Right lobe of liver (tissue), 6 donors: ENCODE measurements at regions of chr17 and their contacts with region 1.

Region 1: GRCh38 chr17:38485146-38485468 is 56.8 kb downstream of the ARHGAP23 start:
- DNase-seq: no peak
- ATAC-seq: no peak
- H3K4me3 ChIP-seq: no peak overlapping the region
- H3K27ac ChIP-seq: no peak overlapping the region
- H3K4me1 ChIP-seq: no peaks in the 10 kb centered on the region
- H3K27me3 ChIP-seq: no peaks in the 10 kb centered on the region
- CTCF ChIP-seq: peak in 1 of 4 donors; percentile 1
- POLR2A ChIP-seq: no peak

Region 2: DNA sequence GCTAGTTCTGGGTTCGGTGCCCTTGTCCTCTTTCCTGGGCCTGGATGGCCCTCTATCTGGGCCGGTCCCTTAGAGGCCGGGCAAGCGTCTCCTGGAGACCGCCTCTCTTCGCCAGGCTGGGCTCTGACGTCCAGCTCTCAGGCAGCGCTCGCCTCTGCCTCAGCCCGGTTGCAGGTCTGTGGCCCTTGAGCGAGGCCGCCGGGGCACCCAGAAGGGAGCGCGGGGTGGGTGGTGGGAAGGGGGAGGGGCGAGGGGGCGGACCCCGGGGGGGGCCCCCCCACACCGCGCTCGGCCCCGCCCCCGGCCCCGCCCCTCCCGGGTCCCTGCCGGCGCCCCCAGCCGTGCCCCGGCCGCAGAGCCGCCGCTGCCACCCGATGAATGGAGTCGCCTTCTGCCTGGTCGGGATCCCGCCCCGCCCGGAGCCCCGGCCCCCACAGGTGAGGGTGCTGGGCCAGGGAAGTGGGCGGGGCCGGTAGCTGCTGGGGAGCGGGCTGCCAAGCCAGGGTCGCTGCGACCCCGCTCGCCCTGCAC is 56.9 kb before region 1 on chr17 and contains the start of gene ARHGAP23:
- intact Hi-C with region 1: loop called (anchors 10 kb)
- DNase-seq: peak in 2 of 3 donors; percentile 65 to 67
- ATAC-seq: peak; percentile 62 to 67 (median 64)
- H3K4me3 ChIP-seq: peak within 1 kb of the TSS; percentile 63 to 78 (median 65)
- H3K27ac ChIP-seq: peak within 1 kb of the TSS; percentile 43 to 69 (median 51)
- H3K4me1 ChIP-seq: peaks cover 0 to 7% (median 0%) of the 10 kb centered on the region in 4 donors
- H3K27me3 ChIP-seq: no peaks in the 10 kb centered on the region
- CTCF ChIP-seq: no peak
- POLR2A ChIP-seq: no peak
- total RNA-seq, gene ARHGAP23: 1.4 to 9.5 (median 3.8) TPM

Region 3: DNA sequence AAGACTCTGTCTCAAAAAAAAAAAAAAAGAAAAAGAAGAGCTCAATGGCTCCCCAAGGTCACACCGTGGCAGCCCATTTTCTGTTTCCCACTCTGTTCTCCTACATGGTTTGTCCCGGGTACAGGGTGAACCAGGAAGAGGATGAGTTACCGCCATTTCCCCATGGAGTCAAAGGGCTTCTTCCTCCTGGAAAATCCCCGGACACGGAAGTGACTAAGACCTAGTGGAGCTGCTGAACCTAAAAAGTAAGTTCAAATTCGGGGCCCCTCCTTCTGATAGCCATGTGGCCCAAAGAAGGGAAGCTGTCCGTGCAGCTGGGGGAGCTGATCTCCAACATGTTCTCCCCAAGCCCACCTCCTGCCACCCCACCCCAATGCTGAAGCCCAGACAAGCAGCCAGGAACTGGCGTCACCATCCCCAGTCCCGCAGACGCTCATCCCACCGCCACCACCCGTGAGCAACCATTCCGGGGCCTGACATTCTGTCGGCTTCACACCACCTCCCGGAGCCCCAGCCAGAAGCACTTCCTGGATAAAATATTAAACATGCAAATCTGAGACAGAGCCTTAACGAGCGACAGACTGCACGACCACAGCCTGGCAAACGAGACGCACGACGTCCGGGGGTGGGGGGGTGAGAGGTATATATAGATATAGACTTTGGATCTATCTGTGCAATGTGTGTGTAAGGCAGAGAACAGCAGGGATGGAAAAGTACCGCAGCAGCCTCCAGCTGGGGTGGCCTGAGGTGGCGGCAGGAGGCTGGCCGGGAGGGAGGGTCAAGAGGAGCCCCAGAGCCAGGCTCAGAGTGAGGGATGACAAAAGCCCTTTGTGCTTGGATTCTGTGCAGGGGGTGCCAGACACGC is 172.1 kb after region 1 on chr17:
- intact Hi-C with region 1: loop called in 1 of 2 experiments (anchors 5 kb)
- DNase-seq: no peak
- ATAC-seq: peak in 1 of 4 donors; percentile 42
- H3K4me3 ChIP-seq: no peak overlapping the region
- H3K27ac ChIP-seq: no peak overlapping the region
- H3K4me1 ChIP-seq: no peaks in the 10 kb centered on the region
- H3K27me3 ChIP-seq: no peaks in the 10 kb centered on the region
- CTCF ChIP-seq: no peak
- POLR2A ChIP-seq: no peak

Region 4: DNA sequence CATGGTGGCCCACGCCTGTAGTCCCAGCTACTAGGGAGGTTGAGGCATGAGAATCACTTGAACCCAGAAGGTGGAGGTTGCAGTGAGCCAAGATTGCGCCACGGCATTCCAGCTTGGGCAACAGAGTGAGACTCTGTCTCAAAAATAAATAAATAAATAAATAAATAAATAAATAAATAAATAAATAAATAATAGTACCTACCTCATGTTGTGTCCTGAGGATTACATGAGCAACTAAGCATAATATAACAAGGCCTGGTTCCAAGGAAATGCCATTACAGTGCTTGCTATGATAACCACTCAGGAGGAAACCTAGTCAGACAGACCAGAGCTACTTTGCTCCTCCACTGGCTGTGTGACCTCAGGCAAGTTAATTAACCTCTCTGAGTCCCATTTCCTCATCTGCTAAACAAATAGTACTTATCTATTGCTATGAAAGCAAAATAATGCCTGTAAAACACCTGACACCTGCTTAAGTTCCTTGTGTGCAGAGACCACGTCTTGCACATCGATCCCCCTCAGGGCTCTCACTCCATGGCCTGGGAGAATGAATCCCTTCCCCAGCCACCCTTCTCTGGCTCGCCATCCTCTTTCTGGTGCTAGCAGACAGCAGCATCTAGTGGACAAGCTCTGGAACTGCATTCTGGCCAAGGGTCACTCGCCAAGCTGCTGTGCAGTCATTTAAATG is 182.1 kb after region 1 on chr17:
- intact Hi-C with region 1: loop called in 1 of 2 experiments (anchors 5 kb)
- DNase-seq: peak; percentile 61 to 75 (median 66)
- ATAC-seq: peak; percentile 82 to 88 (median 86)
- H3K4me3 ChIP-seq: no peak overlapping the region
- H3K27ac ChIP-seq: no peak overlapping the region
- H3K4me1 ChIP-seq: no peaks in the 10 kb centered on the region
- H3K27me3 ChIP-seq: no peaks in the 10 kb centered on the region
- CTCF ChIP-seq: peak; percentile 97 to 99 (median 98)
- POLR2A ChIP-seq: no peak

Region 5: DNA sequence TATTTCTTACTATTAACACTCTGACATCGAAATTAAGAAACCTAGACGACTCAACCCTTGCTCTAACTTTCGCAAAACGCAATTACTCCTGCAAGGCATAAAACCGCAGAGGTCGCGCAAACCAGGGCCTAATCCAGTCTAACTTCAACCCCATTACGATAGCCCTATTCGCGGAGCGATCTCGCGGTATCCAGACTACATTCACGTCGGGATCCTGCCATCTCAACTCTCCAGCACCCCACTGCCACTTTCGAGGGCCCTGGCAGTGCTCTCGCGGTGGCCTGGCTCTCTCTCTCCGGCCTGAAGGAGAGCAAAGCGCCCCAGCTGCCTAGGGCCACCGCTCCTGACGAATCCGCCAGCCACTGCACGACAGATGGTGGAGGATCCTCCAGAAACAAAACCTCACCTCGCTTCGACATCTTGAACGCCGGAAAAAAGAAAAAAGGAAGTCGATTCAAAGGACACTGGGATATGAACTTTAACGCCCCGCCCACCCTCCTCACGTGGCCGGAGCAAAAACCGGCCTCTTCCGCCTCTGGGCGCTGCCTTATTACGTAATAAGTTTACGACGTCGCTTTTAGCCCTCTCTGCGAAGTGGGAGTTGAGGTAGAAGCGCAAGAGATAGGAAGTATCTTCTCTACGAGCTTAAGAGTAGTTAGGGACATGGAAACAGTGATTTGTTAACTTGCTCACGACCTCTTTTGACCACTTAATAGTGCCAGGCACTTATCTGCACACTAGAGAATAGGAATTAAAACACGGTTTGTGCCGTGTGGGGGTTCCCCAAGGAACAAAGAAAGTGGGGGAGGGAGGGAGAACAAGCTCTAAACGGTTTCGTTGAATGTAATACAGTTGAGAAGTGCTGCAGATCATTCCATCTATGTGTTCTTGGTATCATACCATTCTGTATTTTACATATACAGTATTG is 368.4 kb after region 1 on chr17 and contains the start of gene RPL23:
- intact Hi-C with region 1: no loop called
- DNase-seq: peak; percentile 91 to 95 (median 92)
- ATAC-seq: peak; percentile 93 to 97 (median 95)
- H3K4me3 ChIP-seq: peak within 1 kb of the TSS; percentile 66 to 76 (median 72)
- H3K27ac ChIP-seq: peak within 1 kb of the TSS; percentile 66 to 94 (median 80)
- H3K4me1 ChIP-seq: peaks cover 0 to 22% (median 3%) of the 10 kb centered on the region in 4 donors
- H3K27me3 ChIP-seq: no peaks in the 10 kb centered on the region
- CTCF ChIP-seq: no peak
- POLR2A ChIP-seq: peak; percentile 89
- total RNA-seq, gene RPL23: 389 to 609 (median 436) TPM